Activated B cell treated with CpG ODN at 0.5 μM for 24 hours (primary cell): ENCODE measurements at regions of chr17 and their contacts with region 1.

Region 1: GRCh38 chr17:32854207-32854606 is 22.7 kb downstream of the MYO1D start:
- DNase-seq: no peak
- ATAC-seq: no peak
- H3K4me3 Mint-ChIP-seq: no peak overlapping the region
- H3K27ac Mint-ChIP-seq: no peak overlapping the region
- H3K4me1 Mint-ChIP-seq: no peaks in the 10 kb centered on the region
- H3K27me3 Mint-ChIP-seq: no peaks in the 10 kb centered on the region
- CTCF ChIP-seq: no peak

Region 2: GRCh38 chr17:32742681-32743538 is 111.3 kb before region 1 on chr17:
- CTCF ChIA-PET with region 1: no interaction called
- POLR2A ChIA-PET with region 1: no interaction called
- intact Hi-C with region 1: no loop called
- DNase-seq: no peak
- ATAC-seq: no peak
- H3K4me3 Mint-ChIP-seq: no peak overlapping the region
- H3K27ac Mint-ChIP-seq: no peak overlapping the region
- H3K4me1 Mint-ChIP-seq: peaks cover 14% of the 10 kb centered on the region
- H3K27me3 Mint-ChIP-seq: no peaks in the 10 kb centered on the region
- CTCF ChIP-seq: no peak

Region 3: DNA sequence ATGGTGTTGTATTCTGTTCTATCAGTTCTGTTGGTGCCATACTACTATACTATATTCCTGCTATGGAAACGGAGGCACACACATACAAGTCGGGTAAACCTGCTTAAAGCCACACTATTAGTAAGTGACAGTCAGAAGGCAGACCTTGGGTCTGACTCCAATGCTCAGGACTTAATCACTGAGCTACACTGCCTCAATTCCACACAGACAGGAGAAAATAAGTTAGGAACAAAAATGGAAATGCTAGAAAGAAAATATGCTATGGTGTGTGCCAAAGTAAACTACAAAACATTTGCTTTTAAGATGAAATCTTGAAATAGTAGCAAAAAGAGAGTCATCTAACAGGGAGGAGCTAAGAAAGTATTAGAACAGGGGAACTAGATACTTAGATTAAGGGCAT is 25.4 kb before region 1 on chr17:
- CTCF ChIA-PET with region 1: interaction called, 4 read pairs
- POLR2A ChIA-PET with region 1: no interaction called
- intact Hi-C with region 1: loop called (anchors 2 kb)
- DNase-seq: no peak
- ATAC-seq: peak; percentile 18
- H3K4me3 Mint-ChIP-seq: peak overlapping the region; percentile 68
- H3K27ac Mint-ChIP-seq: peak overlapping the region; percentile 82
- H3K4me1 Mint-ChIP-seq: peaks cover 63% of the 10 kb centered on the region
- H3K27me3 Mint-ChIP-seq: no peaks in the 10 kb centered on the region
- CTCF ChIP-seq: no peak